ENCODE measurements at regions of chr16 and their contacts with region 1.

Region 1: GRCh38 chr16:69577446-69577845 is 11.7 kb downstream of the NFAT5 start:
- DNase-seq: no peak
- ATAC-seq: no peak
- H3K4me3 Mint-ChIP-seq: no peak overlapping the region
- H3K27ac Mint-ChIP-seq: no peak overlapping the region
- H3K4me1 Mint-ChIP-seq: peaks cover 4% of the 10 kb centered on the region
- H3K27me3 Mint-ChIP-seq: no peaks in the 10 kb centered on the region

Region 2: GRCh38 chr16:69566240-69566980 is 11.0 kb before region 1 on chr16:
- CTCF ChIA-PET with region 1: interaction called, 11 read pairs
- POLR2A ChIA-PET with region 1: interaction called, 5 read pairs
- DNase-seq: peak; percentile 43
- ATAC-seq: peak; percentile 56
- H3K4me3 Mint-ChIP-seq: peak overlapping the region; percentile 96
- H3K27ac Mint-ChIP-seq: peak overlapping the region; percentile 95
- H3K4me1 Mint-ChIP-seq: peaks cover 47% of the 10 kb centered on the region
- H3K27me3 Mint-ChIP-seq: no peaks in the 10 kb centered on the region

Measured in activated CD8-positive, alpha-beta T cell treated with anti-CD3 and anti-CD28 coated beads, Interleukin-2, amount 10 ng/mL, durations not matched to agents 7 days and 5 days (primary cell).